ENCODE measurements at regions of chr10 and their contacts with region 1.

Region 1: DNA sequence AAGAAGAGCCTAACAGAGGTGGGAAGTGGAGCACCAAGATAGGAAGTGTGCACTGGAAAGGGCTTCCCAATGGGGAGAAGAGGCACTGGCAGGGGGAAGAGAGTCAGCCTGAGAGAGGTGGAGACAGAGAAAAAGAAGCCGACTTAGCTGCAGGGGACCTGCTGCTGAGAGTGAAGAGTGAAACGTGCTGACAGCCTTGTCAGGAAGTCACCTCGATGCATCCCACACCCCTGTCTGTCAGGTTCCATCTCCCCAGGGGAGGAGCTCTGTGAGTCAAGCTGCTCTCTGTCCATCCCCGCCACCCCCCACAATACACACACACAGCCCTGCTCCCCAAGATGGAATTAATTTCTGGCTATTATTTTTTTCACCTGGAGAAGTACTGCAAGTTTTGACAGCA is 14.0 kb downstream of the KAZALD1 start:
- DNase-seq: no peak
- ATAC-seq: no peak
- H3K4me3 ChIP-seq: no peak overlapping the region
- H3K4me3 Mint-ChIP-seq: no peak overlapping the region
- H3K27ac ChIP-seq: no peak overlapping the region
- H3K27ac Mint-ChIP-seq: no peak overlapping the region
- H3K4me1 ChIP-seq: no peaks in the 10 kb centered on the region
- H3K4me1 Mint-ChIP-seq: no peaks in the 10 kb centered on the region
- H3K27me3 ChIP-seq: peaks cover 2 to 8% of the 10 kb centered on the region in 2 experiments
- H3K27me3 Mint-ChIP-seq: peaks cover 58% of the 10 kb centered on the region
- CTCF ChIP-seq: no peak

Region 2: GRCh38 chr10:101060036-101060950 is 15.5 kb before region 1 on chr10:
- CTCF ChIA-PET with region 1: interaction called, 580 read pairs
- POLR2A ChIA-PET with region 1: no interaction called
- intact Hi-C with region 1: no loop called
- DNase-seq: peak; percentile 80 to 96 (median 91)
- ATAC-seq: peak; percentile 67
- H3K4me3 ChIP-seq: peak overlapping the region; percentile 85 to 94
- H3K4me3 Mint-ChIP-seq: peak overlapping the region; percentile 98
- H3K27ac ChIP-seq: peak overlapping the region; percentile 55 to 92
- H3K27ac Mint-ChIP-seq: peak overlapping the region; percentile 91
- H3K4me1 ChIP-seq: peaks cover 27% of the 10 kb centered on the region
- H3K4me1 Mint-ChIP-seq: peaks cover 27% of the 10 kb centered on the region
- H3K27me3 ChIP-seq: peaks cover 20 to 27% of the 10 kb centered on the region in 2 experiments
- H3K27me3 Mint-ChIP-seq: peaks cover 18% of the 10 kb centered on the region
- CTCF ChIP-seq: peak; percentile 95

Measured in CD8-positive, alpha-beta T cell (primary cell).